ENCODE measurements at regions of chr5 and their contacts with region 1.

Region 1: GRCh38 chr5:136686192-136686872 is 321.0 kb upstream of the TRPC7 start:
- DNase-seq: peak; percentile 27
- ATAC-seq: peak; percentile 99
- H3K4me3 Mint-ChIP-seq: no peak overlapping the region
- H3K27ac Mint-ChIP-seq: peak overlapping the region; percentile 80
- H3K4me1 Mint-ChIP-seq: peaks cover 10% of the 10 kb centered on the region
- H3K27me3 Mint-ChIP-seq: no peaks in the 10 kb centered on the region; the same call in none of the 2 replicates
- CTCF ChIP-seq: no peak; the same call in 1 of the 2 replicates

Region 2: DNA sequence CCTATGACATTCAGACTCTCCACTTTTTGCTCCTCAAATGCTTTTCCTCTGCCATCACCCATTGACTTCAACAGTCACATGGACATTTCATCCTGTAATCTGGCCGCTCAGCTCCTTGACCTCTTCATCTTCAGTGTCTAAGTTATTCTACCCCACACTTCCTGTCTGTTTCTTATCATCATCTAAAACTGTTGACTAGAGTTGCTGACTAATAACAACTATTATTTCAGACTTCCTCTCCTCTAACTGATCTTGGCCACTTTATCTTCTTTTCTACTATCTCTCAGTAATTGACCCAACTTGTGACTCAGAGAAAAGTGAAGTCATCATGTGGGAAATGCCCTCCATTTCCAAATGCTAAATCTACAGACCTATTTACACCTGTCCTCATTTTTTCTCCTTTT is 66.3 kb before region 1 on chr5:
- CTCF ChIA-PET with region 1: no interaction called
- POLR2A ChIA-PET with region 1: no interaction called
- DNase-seq: no peak
- ATAC-seq: no peak
- H3K4me3 Mint-ChIP-seq: no peak overlapping the region
- H3K27ac Mint-ChIP-seq: no peak overlapping the region
- H3K4me1 Mint-ChIP-seq: peaks cover 26% of the 10 kb centered on the region
- H3K27me3 Mint-ChIP-seq: no peaks in the 10 kb centered on the region
- CTCF ChIP-seq: no peak

Region 3: GRCh38 chr5:136666970-136667620 is 19.2 kb before region 1 on chr5:
- CTCF ChIA-PET with region 1: interaction called, 10 read pairs
- POLR2A ChIA-PET with region 1: no interaction called
- DNase-seq: no peak
- ATAC-seq: peak; percentile 90
- H3K4me3 Mint-ChIP-seq: no peak overlapping the region
- H3K27ac Mint-ChIP-seq: peak overlapping the region; percentile 54
- H3K4me1 Mint-ChIP-seq: peaks cover 22% of the 10 kb centered on the region
- H3K27me3 Mint-ChIP-seq: no peaks in the 10 kb centered on the region
- CTCF ChIP-seq: no peak

Region 4: GRCh38 chr5:137051165-137051564 is 364.8 kb after region 1 on chr5:
- CTCF ChIA-PET with region 1: no interaction called
- POLR2A ChIA-PET with region 1: no interaction called
- DNase-seq: no peak
- ATAC-seq: peak; percentile 64
- H3K4me3 Mint-ChIP-seq: no peak overlapping the region
- H3K27ac Mint-ChIP-seq: no peak overlapping the region
- H3K4me1 Mint-ChIP-seq: peaks cover 8% of the 10 kb centered on the region
- H3K27me3 Mint-ChIP-seq: no peaks in the 10 kb centered on the region
- CTCF ChIP-seq: peak; percentile 39; the same call in 1 of the 2 replicates

Measured in WTC11 (cell line).